BJ (cell line): ENCODE measurements at regions of chr10 and their contacts with region 1.

Region 1: GRCh38 chr10:4849555-4850242 is 23.7 kb downstream of the AKR1E2 start:
- DNase-seq: peak; percentile 44
- H3K4me3 ChIP-seq: no peak overlapping the region
- H3K27me3 ChIP-seq: no peaks in the 10 kb centered on the region
- CTCF ChIP-seq: peak; percentile 99

Region 2: GRCh38 chr10:4825851-4826665 is 23.6 kb before region 1 on chr10 and contains the start of gene AKR1E2:
- CTCF ChIA-PET with region 1: interaction called, 13 read pairs
- POLR2A ChIA-PET with region 1: no interaction called
- DNase-seq: peak; percentile 71
- H3K4me3 ChIP-seq: peak within 1 kb of the TSS; percentile 60
- H3K27me3 ChIP-seq: no peaks in the 10 kb centered on the region
- CTCF ChIP-seq: no peak
- polyA plus RNA-seq, gene AKR1E2: 2.5 and 3.3 TPM in 2 replicates

Region 3: DNA sequence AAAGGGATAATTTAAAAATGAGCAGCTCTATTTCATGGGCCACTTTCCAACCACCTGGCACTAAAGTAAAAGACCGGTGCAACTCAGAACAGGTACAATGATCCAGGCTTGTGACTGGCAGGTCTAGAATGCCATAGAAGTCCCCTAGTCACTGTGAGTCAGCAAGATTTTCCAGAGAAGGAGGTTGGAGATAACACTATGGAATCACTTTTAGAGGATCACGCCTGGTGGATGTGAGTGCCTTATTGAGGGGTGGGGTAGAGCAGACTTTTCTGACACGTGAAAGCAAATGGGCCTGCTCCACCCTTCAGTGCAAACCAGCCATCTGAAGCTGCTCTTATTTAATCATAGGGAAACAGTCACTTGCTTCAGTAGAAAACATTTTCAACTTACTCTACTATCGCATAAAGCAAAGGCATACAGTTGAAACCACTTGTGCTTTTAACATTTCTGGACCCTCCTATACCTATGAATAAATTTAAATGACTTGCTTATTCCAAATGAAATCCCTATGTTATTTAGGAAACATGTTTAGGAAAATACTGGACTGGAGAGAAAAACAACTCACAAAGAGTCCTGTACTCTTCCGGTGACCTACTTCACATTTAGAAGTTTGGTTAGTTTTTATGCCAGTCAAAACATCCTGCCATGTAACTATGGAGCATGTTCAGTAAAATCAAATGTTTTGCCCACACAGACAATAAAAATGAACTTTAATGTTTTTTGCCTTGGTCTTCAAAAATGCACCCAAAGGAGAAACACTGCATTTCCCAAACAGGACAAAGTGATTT is 92.0 kb after region 1 on chr10:
- CTCF ChIA-PET with region 1: interaction called, 26 read pairs
- POLR2A ChIA-PET with region 1: no interaction called
- DNase-seq: no peak
- H3K4me3 ChIP-seq: no peak overlapping the region
- H3K27me3 ChIP-seq: no peaks in the 10 kb centered on the region
- CTCF ChIP-seq: no peak

Region 4: DNA sequence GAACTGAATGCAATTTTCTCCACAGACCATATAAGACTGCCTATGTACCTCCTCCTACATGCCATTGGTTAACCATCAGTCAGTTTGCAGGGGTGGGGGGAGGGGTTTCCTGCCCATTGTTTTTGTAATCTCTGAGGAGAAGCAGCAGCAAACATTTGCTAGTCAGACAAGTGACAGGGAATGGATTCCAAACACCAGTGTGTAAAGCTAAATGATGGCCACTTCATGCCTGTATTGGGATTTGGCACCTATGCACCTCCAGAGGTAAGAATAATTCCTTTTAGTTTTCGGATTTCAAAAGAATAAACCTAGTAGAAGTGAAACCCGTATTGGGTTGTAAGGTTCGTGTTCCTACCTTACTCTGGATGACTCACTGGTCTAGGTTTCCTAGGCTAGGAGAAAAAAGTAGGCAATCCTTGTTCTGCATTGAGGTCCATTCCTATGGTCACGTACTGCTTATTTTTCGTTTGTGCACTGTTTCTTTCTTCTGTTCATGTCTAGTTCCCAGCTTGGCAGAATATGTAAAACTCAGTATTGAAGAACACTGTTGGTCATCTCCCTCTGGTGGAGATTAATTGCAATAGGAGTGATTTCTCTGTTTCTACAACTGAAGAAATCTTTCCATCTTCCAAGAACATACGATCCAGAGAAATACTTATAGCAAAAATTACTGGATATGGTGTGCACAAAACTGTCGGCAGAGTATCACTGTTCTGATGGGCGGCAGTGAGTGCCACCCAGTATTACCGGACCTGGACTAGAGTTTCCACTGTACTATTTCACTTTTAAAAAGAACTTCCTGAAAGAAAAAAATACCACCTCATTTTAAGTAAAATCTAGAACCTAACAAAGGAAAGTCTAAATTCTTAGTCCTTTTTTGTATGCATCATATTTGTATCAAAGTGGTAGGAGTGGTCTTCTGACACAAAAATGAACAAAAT is 244.8 kb after region 1 on chr10 and contains the start of gene AKR1C3:
- CTCF ChIA-PET with region 1: interaction called, 172 read pairs
- POLR2A ChIA-PET with region 1: no interaction called
- DNase-seq: no peak
- H3K4me3 ChIP-seq: 0 out of 2 replicates have a peak within 1 kb of the TSS, but pooled peaks have one; percentile 16
- H3K27me3 ChIP-seq: no peaks in the 10 kb centered on the region
- CTCF ChIP-seq: peak; percentile 59
- polyA plus RNA-seq, gene AKR1C3: 0.26 and 0.43 TPM in 2 replicates

Region 5: GRCh38 chr10:5291501-5292195 is 441.9 kb after region 1 on chr10:
- CTCF ChIA-PET with region 1: interaction called, 10 read pairs
- POLR2A ChIA-PET with region 1: no interaction called
- DNase-seq: peak; percentile 87
- H3K4me3 ChIP-seq: no peak overlapping the region
- H3K27me3 ChIP-seq: no peaks in the 10 kb centered on the region
- CTCF ChIP-seq: no peak

Region 6: DNA sequence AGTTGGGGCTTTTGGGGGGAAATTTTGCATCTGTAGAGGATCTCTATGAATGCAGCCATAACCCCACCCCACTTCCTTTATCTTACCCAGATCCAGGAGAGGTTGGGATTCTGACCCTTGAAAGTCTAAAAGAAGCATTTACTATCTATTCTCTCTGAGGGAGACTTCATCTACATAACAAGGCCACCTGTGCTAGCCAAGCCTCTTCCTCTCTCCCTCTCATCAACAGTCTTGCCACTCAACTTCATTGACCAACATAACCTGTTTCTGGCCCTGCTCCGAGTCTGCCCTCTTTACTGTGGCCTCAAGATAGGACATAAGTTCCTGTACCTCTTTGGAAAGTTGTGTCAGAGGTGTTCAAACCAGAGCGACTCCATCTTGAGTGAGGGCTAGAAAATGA is 535.5 kb after region 1 on chr10:
- CTCF ChIA-PET with region 1: interaction called, 29 read pairs
- POLR2A ChIA-PET with region 1: no interaction called
- DNase-seq: no peak
- H3K4me3 ChIP-seq: no peak overlapping the region
- H3K27me3 ChIP-seq: no peaks in the 10 kb centered on the region; the same call in 1 of the 2 replicates
- CTCF ChIP-seq: no peak